ENCODE measurements at regions of chr9 and their contacts with region 1.

Region 1: DNA sequence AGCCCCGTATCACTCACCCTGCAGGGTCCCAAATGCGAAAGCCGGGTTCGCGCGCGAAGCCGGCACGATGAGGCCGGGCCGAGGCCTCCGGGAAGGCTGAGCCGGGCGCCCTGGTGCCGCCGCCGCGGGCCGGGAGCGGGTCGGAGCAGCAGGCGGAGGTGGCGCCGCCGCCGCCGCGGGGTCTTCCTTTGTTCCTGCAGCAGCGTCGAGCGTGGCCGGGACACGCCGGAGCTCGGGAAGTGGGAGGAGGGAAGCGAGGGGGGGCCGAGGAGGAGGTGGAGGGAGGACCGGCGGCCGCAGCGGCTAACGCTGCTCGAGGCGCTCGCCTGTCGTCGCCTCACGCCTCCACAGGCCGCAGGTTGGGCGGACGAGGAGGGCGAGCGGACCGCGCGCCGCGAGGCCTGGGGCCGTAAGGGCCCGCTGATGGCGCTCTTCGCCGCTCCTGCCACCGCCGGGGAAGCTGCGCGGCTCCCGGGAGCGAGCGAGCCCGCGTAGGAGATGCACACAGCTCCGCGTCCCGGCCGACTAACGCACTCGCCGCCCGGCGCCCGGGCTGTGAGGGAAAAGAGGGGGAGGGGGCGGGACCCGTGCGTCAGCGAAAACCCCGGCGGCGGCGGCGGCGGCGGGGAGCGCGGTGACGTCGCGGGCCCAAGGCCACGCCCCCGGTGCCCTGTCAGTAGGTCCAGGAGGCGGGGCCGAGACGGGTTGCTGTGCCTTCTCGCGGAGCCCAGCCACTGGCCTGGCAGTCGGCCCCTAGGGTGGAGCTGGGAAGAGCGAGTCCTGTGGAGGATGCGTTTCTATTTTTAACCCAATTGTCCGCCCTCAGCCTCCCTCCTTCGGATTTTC is at the start of gene ZFAND5:
- DNase-seq: peak; percentile 99
- ATAC-seq: peak; percentile 88
- total RNA-seq, gene ZFAND5: 105 to 161 TPM

Region 2: GRCh38 chr9:72415163-72415562 is 50.3 kb after region 1 on chr9:
- intact Hi-C with region 1: no loop called
- DNase-seq: no peak
- ATAC-seq: no peak

Region 3: GRCh38 chr9:72586388-72587130 is 221.7 kb after region 1 on chr9:
- intact Hi-C with region 1: loop called in 1 of 2 experiments (anchors 5 kb)
- DNase-seq: peak in 1 of 2 donors; percentile 53
- ATAC-seq: peak; percentile 78

Region 4: GRCh38 chr9:72839085-72839484 is 474.2 kb after region 1 on chr9:
- intact Hi-C with region 1: loop called in 1 of 2 experiments (anchors 5 kb)
- DNase-seq: no peak
- ATAC-seq: no peak